Caco-2 (cell line): ENCODE measurements at regions of chr19 and their contacts with region 1.

Region 1: DNA sequence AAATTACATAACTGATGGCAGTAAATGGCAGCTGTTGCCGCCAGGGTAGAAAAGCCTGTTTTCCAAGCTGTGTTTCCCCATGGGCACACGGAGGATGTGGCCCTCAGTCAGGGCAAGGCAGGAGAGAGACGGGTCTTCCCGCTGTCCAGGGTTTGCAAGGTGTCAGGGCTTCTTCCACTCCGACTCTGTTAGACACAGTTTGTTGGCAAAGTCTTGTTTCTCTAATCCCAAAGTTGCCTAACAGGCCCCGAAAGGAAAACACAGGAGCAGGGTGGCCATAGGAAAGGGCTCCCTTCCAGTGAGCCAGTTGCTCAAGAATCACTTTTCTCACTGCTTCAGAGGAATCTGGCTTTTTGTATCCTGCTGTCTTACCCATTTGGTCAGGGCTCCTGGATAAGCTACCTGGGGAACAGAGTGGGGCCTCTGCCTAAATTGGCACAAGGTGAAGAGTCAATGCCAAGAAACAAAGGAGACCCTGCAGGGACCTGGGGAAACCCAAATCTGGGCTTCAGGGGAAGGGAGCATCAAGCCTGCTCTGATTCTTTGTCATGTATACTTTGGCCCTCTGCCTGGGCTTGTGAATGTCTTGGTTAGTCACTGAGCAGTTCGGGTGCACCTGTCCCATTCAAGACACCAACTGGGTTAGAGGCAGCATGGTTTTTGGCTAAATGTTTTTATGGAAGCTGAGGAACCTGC is 29.0 kb upstream of the CXCL17 start:
- DNase-seq: peak in 1 of 2 experiments; percentile 34
- H3K4me3 ChIP-seq: no peak overlapping the region
- H3K4me3 Mint-ChIP-seq: no peak overlapping the region
- H3K27ac Mint-ChIP-seq: no peak overlapping the region
- H3K4me1 ChIP-seq: no peaks in the 10 kb centered on the region
- H3K4me1 Mint-ChIP-seq: peaks cover 12% of the 10 kb centered on the region
- H3K27me3 ChIP-seq: no peaks in the 10 kb centered on the region
- H3K27me3 Mint-ChIP-seq: no peaks in the 10 kb centered on the region
- CTCF ChIP-seq: no peak

Region 2: GRCh38 chr19:42497492-42498168 is 25.9 kb after region 1 on chr19:
- CTCF ChIA-PET with region 1: interaction called, 10 read pairs
- POLR2A ChIA-PET with region 1: no interaction called
- intact Hi-C with region 1: no loop called
- DNase-seq: peak; percentile 81 to 88
- H3K4me3 ChIP-seq: no peak overlapping the region
- H3K4me3 Mint-ChIP-seq: peak overlapping the region; percentile 69
- H3K27ac Mint-ChIP-seq: peak overlapping the region; percentile 32
- H3K4me1 ChIP-seq: peaks cover 33% of the 10 kb centered on the region
- H3K4me1 Mint-ChIP-seq: peaks cover 49% of the 10 kb centered on the region
- H3K27me3 ChIP-seq: no peaks in the 10 kb centered on the region
- H3K27me3 Mint-ChIP-seq: no peaks in the 10 kb centered on the region
- CTCF ChIP-seq: no peak